ENCODE measurements at regions of chr3 and their contacts with region 1.

Region 1: GRCh38 chr3:12484198-12484974 is at the start of gene TSEN2:
- DNase-seq: peak; percentile 93
- ATAC-seq: peak; percentile 83
- H3K4me3 Mint-ChIP-seq: peak within 1 kb of the TSS; percentile 97
- H3K27ac Mint-ChIP-seq: peak within 1 kb of the TSS; percentile 93
- H3K4me1 Mint-ChIP-seq: peaks cover 27% of the 10 kb centered on the region
- H3K27me3 Mint-ChIP-seq: no peaks in the 10 kb centered on the region; the same call in 1 of the 2 replicates
- CTCF ChIP-seq: no peak
- total RNA-seq, gene TSEN2: 19.9 to 21.1 TPM (median 20.2 TPM) in 3 replicates

Region 2: DNA sequence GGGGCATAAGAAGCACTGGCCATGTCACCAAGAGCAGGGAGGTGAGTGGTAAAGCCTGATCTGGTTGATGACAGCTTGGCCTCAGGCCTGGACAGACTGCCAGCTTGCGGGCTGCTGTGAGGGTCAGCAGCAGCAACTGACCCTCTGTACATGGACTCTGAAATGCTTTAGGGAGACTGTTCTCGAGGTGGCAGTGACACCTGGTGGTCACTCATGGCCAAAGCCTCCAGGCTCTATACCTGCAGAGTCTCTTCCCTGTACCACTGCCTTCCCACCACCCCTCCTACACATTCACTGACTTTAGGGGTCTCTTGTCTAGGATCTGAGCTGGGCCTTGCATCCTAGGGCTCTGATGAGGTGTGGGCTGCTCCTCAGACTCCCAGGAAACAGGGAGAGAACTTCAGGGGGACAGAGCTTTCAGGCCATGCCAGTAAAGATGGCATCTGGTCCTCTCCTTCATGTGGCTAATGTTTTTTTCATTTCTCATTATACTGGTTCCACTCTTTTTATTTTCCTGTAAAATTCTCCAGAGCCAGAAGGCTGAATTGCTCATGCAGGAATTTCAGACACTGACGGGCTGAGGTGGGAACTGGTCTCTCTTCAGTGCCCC is 308.4 kb before region 1 on chr3:
- CTCF ChIA-PET with region 1: interaction called, 13 read pairs
- POLR2A ChIA-PET with region 1: no interaction called
- DNase-seq: peak; percentile 76
- ATAC-seq: peak; percentile 96
- H3K4me3 Mint-ChIP-seq: no peak overlapping the region
- H3K27ac Mint-ChIP-seq: no peak overlapping the region
- H3K4me1 Mint-ChIP-seq: no peaks in the 10 kb centered on the region
- H3K27me3 Mint-ChIP-seq: no peaks in the 10 kb centered on the region
- CTCF ChIP-seq: peak; percentile 70

Region 3: DNA sequence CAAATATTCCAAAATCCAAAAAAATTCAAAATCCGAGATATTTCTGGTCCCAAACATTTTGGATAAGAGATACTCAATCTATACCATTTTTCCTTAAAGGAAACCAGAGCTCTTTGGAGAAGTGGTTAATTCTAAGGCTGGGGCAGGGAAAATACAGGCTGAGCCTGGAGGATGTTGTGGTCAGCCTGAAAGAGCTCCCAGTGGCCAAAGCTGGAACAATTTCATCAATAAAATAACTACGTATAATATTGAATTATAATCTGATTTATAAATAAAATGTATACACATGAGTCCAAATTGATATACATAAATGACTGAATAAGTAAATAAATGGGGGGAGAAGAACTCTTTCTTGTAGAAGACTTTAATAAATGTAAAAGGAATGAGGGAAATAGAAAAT is 170.9 kb before region 1 on chr3:
- CTCF ChIA-PET with region 1: interaction called, 10 read pairs
- POLR2A ChIA-PET with region 1: no interaction called
- DNase-seq: no peak
- ATAC-seq: no peak
- H3K4me3 Mint-ChIP-seq: no peak overlapping the region
- H3K27ac Mint-ChIP-seq: no peak overlapping the region
- H3K4me1 Mint-ChIP-seq: no peaks in the 10 kb centered on the region
- H3K27me3 Mint-ChIP-seq: peaks cover 5% of the 10 kb centered on the region
- CTCF ChIP-seq: no peak

Region 4: DNA sequence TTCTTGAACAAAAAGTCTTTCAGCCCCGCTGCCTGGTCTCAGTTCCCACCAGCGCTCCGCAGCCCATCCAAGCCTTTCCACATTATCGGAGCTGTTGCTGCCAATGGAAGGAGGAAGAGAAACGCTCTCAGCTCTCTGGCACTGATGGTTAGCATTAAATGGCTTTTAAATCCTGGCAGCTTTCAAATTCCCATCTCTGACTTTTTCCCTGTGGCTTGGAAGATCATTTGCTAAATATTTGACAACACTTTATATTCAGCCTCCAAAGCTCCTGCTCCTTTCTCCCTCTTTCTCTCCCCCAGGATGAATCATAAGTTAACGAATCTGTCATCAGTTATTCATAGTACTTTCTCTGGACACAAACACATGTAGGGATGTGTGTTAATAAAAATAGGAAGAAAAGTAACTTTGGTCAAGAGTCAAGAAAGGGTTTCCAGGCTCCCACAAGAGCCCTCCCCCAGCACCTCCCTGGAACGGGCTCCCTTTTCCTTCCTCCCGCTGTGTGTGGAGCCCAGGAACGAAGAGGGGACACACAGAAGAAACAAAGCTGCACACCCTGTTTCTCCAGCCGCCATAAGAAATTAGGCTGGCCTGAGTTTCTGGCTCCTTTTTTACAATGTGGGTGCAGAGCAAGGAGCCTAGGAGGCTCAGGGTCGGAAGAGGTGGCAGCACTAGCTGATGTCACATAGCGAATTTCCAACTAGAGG is 47.7 kb before region 1 on chr3:
- CTCF ChIA-PET with region 1: interaction called, 13 read pairs
- POLR2A ChIA-PET with region 1: no interaction called
- DNase-seq: no peak
- ATAC-seq: no peak
- H3K4me3 Mint-ChIP-seq: no peak overlapping the region
- H3K27ac Mint-ChIP-seq: no peak overlapping the region
- H3K4me1 Mint-ChIP-seq: peaks cover 10% of the 10 kb centered on the region
- H3K27me3 Mint-ChIP-seq: no peaks in the 10 kb centered on the region; the same call in 1 of the 2 replicates
- CTCF ChIP-seq: no peak

Region 5: GRCh38 chr3:12495749-12496452 is 11.5 kb after region 1 on chr3:
- CTCF ChIA-PET with region 1: interaction called, 24 read pairs
- POLR2A ChIA-PET with region 1: interaction called, 4 read pairs
- DNase-seq: peak; percentile 56
- ATAC-seq: peak; percentile 87
- H3K4me3 Mint-ChIP-seq: no peak overlapping the region
- H3K27ac Mint-ChIP-seq: no peak overlapping the region
- H3K4me1 Mint-ChIP-seq: no peaks in the 10 kb centered on the region
- H3K27me3 Mint-ChIP-seq: no peaks in the 10 kb centered on the region
- CTCF ChIP-seq: no peak

Measured in WTC11 (cell line).